BJ (cell line): ENCODE measurements at regions of chr2 and their contacts with region 1.

Region 1: DNA sequence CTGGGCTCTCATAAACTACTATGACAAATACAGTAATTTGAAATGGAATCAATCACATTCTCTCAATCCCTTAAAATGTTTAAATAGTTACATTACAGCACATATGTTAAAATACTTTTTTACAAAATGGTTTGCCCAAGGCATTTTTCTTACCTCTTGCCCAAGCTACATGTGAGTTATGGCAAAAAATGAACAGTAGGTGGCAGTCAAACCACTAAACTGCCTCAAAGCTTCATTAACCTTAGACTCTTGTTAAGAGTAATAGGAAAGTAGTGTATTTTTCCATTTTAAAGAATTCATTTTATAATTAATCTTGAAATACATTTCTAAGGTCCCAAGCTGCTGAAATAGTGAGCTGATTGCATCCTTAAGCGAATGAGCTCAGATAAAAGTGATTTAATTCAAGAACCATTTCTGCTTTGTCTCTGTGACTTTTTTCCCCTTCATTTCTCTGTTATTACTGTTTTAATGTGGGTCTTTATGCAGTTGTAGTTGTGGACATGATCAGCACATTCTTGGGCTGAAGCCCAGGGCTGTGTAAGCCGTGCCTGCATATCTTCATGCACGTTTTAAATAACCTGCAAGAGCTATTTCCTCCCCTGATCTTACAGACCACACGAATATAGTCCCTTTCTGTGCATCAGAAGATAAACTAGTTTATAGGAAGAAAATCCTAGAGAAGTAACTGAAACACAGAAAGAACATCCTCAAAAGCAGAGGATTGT is 311.8 kb downstream of the LNPK start:
- DNase-seq: peak; percentile 41
- H3K4me3 ChIP-seq: no peak overlapping the region
- H3K27me3 ChIP-seq: peaks cover 4% of the 10 kb centered on the region
- CTCF ChIP-seq: peak; percentile 70

Region 2: DNA sequence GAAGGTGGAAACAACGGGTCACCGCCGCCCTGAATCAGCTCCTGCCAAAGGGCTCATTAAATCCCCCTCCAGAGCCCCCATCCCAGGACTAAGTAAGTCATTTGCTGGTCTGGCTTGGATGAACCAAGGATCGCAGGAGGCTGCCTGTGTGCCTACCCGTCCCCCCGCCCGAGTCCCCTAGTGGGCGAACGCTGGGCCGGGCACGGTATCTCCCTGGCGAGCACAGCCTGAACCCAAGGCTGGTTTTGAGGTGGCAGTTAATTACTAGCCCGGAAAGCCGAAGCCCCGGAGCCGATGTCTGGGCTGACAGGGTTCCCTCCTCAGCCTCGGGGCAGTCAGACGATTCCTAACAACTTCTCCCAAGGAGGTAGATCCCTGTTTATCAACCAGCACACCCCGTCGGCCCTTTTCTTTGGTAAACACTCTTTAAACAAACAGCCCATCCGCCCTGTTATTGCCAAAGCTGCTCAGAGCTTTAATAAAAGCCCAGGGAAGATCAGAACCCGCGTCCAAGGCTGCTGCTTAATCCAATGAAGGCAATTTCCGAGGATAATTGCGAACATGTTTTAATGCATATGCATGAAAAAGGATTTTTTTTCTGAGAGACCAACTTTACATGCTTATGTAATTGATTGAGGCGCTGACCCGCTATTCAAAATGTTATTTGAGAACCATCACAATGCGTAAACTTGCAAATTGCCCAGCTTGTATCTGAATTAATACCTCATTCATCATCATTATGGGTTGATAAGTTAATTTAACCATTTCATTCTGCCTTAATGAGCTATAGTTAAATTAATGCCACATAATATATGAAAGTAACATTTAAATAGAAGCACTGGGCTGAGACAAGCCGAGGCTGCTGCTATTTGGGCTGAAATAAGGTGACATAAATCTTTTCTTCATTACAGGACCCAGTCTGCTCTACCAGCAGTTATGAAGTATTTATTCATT is 383.0 kb after region 1 on chr2:
- CTCF ChIA-PET with region 1: interaction called, 11 read pairs
- POLR2A ChIA-PET with region 1: no interaction called
- DNase-seq: no peak
- H3K4me3 ChIP-seq: no peak overlapping the region
- H3K27me3 ChIP-seq: peaks cover 8% of the 10 kb centered on the region
- CTCF ChIP-seq: no peak

Region 3: DNA sequence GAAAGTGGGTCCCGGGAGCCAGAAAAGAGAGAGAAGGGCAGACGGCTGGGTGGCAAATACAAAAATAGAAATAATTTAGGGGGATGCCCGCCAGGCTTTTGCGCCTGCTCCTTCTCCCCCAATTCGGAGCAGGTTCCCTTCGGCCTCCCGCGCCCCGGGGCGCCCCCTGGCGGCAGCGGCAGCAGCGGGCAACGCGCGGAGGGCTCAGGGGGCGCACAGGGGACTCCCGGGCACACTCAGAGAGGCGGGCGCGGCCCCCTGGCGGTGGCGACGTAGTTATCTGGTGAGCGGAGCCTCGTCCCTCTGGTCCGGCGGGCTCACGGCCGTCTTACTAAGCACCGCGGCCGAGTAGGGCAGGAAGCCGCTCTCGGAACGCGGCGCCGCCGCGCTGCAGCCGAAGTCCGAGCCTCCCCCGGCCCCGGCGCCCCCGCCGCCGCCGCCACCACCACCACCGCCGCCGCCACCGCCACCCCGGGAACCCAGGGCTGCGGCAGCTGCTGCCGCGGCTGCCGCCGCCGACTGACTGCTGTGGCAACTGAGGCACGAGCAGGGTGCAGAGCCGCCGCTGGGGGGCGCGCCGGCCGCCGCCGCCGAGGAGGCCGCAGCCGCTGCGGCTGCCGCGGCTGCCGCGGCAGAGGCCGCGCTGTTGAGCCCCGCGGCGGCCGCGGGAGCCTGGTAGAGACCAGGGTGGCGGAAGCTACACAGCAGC is 389.7 kb after region 1 on chr2:
- CTCF ChIA-PET with region 1: interaction called, 75 read pairs
- POLR2A ChIA-PET with region 1: no interaction called
- DNase-seq: no peak
- H3K4me3 ChIP-seq: peak overlapping the region; percentile 23
- H3K27me3 ChIP-seq: peaks cover 49% of the 10 kb centered on the region
- CTCF ChIP-seq: peak; percentile 63

Region 4: GRCh38 chr2:176088048-176088936 is 398.0 kb after region 1 on chr2:
- CTCF ChIA-PET with region 1: interaction called, 75 read pairs
- POLR2A ChIA-PET with region 1: no interaction called
- DNase-seq: no peak
- H3K4me3 ChIP-seq: peak overlapping the region; percentile 33
- H3K27me3 ChIP-seq: peaks cover 49% of the 10 kb centered on the region
- CTCF ChIP-seq: peak; percentile 93

Region 5: GRCh38 chr2:176096986-176097819 is 406.9 kb after region 1 on chr2:
- CTCF ChIA-PET with region 1: interaction called, 48 read pairs
- POLR2A ChIA-PET with region 1: no interaction called
- DNase-seq: no peak
- H3K4me3 ChIP-seq: peak overlapping the region; percentile 52
- H3K27me3 ChIP-seq: peaks cover 27% of the 10 kb centered on the region
- CTCF ChIP-seq: peak; percentile 94